Naive thymus-derived CD4-positive, alpha-beta T cell (primary cell): ENCODE measurements at regions of chr10 and their contacts with region 1.

Region 1: DNA sequence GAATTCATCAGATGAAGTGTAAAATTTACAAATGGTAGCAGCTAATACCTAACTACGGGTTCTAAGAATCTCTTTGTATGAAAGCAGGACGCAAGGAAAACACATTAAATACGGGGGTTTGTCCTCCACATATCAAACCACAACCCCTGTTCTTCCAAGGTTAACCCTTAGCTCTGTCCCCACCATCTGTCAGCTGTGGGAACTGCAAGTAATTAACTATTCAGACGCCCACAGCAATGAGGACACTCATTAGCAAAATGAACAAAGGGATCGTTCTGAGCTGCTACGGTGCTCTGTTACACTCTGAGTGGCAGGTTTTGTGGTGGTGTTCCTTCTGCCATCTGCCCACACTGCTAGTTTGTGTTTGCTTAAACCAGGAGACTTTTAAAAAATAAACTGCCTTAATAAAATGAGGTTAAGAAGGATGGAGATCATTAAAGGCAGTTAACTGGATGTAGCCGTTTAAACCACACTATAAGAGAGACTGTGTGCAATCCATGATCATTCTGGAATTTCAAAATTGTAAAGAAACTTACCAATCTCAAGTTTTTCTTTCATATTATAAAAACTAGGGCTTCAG is 51.4 kb downstream of the C10orf67 start:
- DNase-seq: peak in 5 of 9 donors; percentile 8 to 22 (median 16)
- ATAC-seq: peak; percentile 65
- H3K4me3 ChIP-seq: no peak overlapping the region
- H3K4me3 Mint-ChIP-seq: no peak overlapping the region
- H3K27ac ChIP-seq: no peak overlapping the region
- H3K27ac Mint-ChIP-seq: no peak overlapping the region
- H3K4me1 ChIP-seq: no peaks in the 10 kb centered on the region
- H3K4me1 Mint-ChIP-seq: peaks cover 0 to 2% (median 0%) of the 10 kb centered on the region in 7 donors
- H3K27me3 ChIP-seq: peaks cover 0 to 6% of the 10 kb centered on the region in 2 donors
- H3K27me3 Mint-ChIP-seq: peaks cover 16 to 32% (median 20%) of the 10 kb centered on the region in 5 donors

Region 2: GRCh38 chr10:22017283-22018020 is 1275.8 kb before region 1 on chr10:
- CTCF ChIA-PET with region 1: no interaction called
- POLR2A ChIA-PET with region 1: no interaction called
- intact Hi-C with region 1: no loop called
- DNase-seq: no peak
- ATAC-seq: no peak
- H3K4me3 ChIP-seq: no peak overlapping the region
- H3K4me3 Mint-ChIP-seq: no peak overlapping the region
- H3K27ac ChIP-seq: no peak overlapping the region
- H3K27ac Mint-ChIP-seq: peak overlapping the region in 1 of 9 donors; percentile 16
- H3K4me1 ChIP-seq: peaks cover 0 to 6% of the 10 kb centered on the region in 2 donors
- H3K4me1 Mint-ChIP-seq: peaks cover 7 to 17% (median 12%) of the 10 kb centered on the region in 7 donors
- H3K27me3 ChIP-seq: no peaks in the 10 kb centered on the region
- H3K27me3 Mint-ChIP-seq: peaks cover 0 to 4% (median 0%) of the 10 kb centered on the region in 5 donors

Region 3: GRCh38 chr10:23081891-23082290 is 211.3 kb before region 1 on chr10:
- CTCF ChIA-PET with region 1: no interaction called
- POLR2A ChIA-PET with region 1: no interaction called
- intact Hi-C with region 1: loop called in 1 of 2 experiments (anchors 5 kb)
- DNase-seq: no peak
- ATAC-seq: no peak
- H3K4me3 ChIP-seq: no peak overlapping the region
- H3K4me3 Mint-ChIP-seq: no peak overlapping the region
- H3K27ac ChIP-seq: no peak overlapping the region
- H3K27ac Mint-ChIP-seq: no peak overlapping the region
- H3K4me1 ChIP-seq: no peaks in the 10 kb centered on the region
- H3K4me1 Mint-ChIP-seq: no peaks in the 10 kb centered on the region
- H3K27me3 ChIP-seq: no peaks in the 10 kb centered on the region
- H3K27me3 Mint-ChIP-seq: peaks cover 29 to 58% (median 35%) of the 10 kb centered on the region in 5 donors

Region 4: DNA sequence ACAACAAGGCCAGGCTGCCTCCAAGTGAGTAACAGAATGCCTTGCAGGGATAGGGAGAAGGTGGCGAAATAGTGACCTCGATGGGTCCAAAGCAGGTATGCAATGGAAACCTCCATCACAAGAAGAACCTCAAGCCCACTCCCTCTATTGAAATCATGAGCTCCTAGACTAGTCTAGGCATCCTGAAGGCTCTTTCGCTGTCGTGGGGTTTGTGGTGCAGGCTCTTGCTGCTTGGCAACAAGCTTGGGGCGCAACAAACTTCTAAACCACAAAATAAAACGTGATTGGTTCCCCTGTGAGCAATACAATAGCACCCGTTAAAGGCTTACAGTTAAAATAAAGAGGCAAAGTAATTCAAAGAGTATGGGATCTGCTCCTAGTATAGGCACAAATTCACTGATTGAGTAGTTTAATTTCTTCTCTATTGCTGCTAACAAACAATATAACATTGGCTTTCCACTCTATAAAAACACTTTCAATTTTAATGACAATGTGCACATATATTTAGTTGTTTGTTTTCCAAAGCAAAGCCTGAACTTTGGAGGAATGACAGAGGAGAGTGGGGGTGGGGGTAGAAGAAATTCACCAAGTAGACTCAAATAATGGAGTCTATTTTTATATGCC is 12.7 kb before region 1 on chr10:
- CTCF ChIA-PET with region 1: no interaction called
- POLR2A ChIA-PET with region 1: no interaction called
- intact Hi-C with region 1: no loop called
- DNase-seq: no peak
- ATAC-seq: no peak
- H3K4me3 ChIP-seq: no peak overlapping the region
- H3K4me3 Mint-ChIP-seq: no peak overlapping the region
- H3K27ac ChIP-seq: no peak overlapping the region
- H3K27ac Mint-ChIP-seq: no peak overlapping the region
- H3K4me1 ChIP-seq: no peaks in the 10 kb centered on the region
- H3K4me1 Mint-ChIP-seq: peaks cover 0 to 4% (median 0%) of the 10 kb centered on the region in 7 donors
- H3K27me3 ChIP-seq: no peaks in the 10 kb centered on the region
- H3K27me3 Mint-ChIP-seq: peaks cover 21 to 39% (median 24%) of the 10 kb centered on the region in 5 donors